ENCODE measurements at regions of chr12 and their contacts with region 1.

Region 1: GRCh38 chr12:123983822-123984485 is 10.9 kb downstream of the ZNF664 start:
- DNase-seq: peak; percentile 51 to 83
- ATAC-seq: peak; percentile 96 to 99
- H3K4me3 ChIP-seq: no peak overlapping the region
- H3K27ac ChIP-seq: no peak overlapping the region
- H3K4me1 ChIP-seq: no peaks in the 10 kb centered on the region
- CTCF ChIP-seq: peak; percentile 72
- EP300 ChIP-seq: no peak
- POLR2A ChIP-seq: no peak
- RAD21 ChIP-seq: peak; percentile 79 to 85

Region 2: GRCh38 chr12:123905319-123905925 is 78.5 kb before region 1 on chr12:
- CTCF ChIA-PET with region 1: interaction called, 13 read pairs
- POLR2A ChIA-PET with region 1: no interaction called
- DNase-seq: peak; percentile 61 to 79
- ATAC-seq: peak; percentile 20 to 60; a peak in 3 of 6 replicates
- H3K4me3 ChIP-seq: no peak overlapping the region
- H3K27ac ChIP-seq: no peak overlapping the region
- H3K4me1 ChIP-seq: no peaks in the 10 kb centered on the region
- CTCF ChIP-seq: peak; percentile 79
- EP300 ChIP-seq: no peak
- POLR2A ChIP-seq: no peak
- RAD21 ChIP-seq: peak; percentile 36 to 51; a peak in 4 of 5 replicates

Region 3: DNA sequence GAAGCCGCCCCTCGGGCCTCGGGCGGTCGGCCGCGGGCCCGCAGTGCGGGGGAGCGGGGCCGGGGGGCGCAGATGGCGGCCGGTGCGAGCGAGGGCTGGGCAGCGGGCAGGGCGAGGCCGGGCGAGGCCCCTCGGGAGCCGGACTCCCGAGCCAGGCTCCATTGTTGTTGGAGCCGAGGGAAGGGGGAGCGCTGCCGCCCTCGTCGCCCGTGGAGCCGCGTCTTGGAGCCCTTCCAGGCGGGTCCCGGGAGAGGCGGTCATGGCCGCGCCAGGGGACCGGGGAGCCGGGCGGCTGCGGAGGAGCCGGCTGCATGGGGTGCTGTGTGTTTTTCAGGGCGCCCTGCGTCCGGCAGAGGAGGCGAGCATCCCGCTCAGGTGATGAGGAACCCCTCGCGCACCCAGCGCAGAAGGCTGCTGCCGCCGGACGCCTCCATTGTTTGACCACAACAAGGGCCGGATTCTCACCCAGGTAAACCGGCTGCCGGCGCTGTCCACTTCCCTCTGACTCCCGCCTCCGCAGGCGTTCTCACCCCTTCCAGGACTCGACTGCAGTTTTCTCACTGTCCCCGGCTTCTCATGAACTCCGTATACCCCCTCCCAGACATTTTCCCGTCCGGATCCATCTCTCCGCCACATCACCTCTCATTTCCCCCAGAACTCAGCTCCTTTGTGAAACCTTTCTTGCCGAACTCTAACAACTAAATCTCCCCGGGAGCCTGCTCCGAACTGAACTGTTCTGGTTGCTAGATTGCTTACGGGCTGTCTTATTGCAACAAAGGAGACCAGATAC is 10.2 kb before region 1 on chr12:
- CTCF ChIA-PET with region 1: interaction called, 10 read pairs
- POLR2A ChIA-PET with region 1: interaction called, 3 read pairs
- DNase-seq: peak; percentile 39 to 40
- ATAC-seq: peak; percentile 21 to 45
- H3K4me3 ChIP-seq: peak overlapping the region; percentile 83
- H3K27ac ChIP-seq: peak overlapping the region; percentile 89 to 96
- H3K4me1 ChIP-seq: peaks cover 37% of the 10 kb centered on the region
- CTCF ChIP-seq: no peak
- EP300 ChIP-seq: no peak
- POLR2A ChIP-seq: no peak
- RAD21 ChIP-seq: no peak